ENCODE measurements at regions of chr1 and their contacts with region 1.

Region 1: GRCh38 chr1:116139592-116140134 is 28.5 kb downstream of the MAB21L3 start:
- DNase-seq: no peak
- H3K4me3 ChIP-seq: no peak overlapping the region
- H3K4me3 Mint-ChIP-seq: no peak overlapping the region
- H3K27ac ChIP-seq: no peak overlapping the region
- H3K27ac Mint-ChIP-seq: no peak overlapping the region
- H3K4me1 ChIP-seq: no peaks in the 10 kb centered on the region
- H3K4me1 Mint-ChIP-seq: peaks cover 5 to 8% (median 6%) of the 10 kb centered on the region in 4 donors
- H3K27me3 ChIP-seq: no peaks in the 10 kb centered on the region
- H3K27me3 Mint-ChIP-seq: peaks cover 4 to 7% of the 10 kb centered on the region in 2 donors

Region 2: DNA sequence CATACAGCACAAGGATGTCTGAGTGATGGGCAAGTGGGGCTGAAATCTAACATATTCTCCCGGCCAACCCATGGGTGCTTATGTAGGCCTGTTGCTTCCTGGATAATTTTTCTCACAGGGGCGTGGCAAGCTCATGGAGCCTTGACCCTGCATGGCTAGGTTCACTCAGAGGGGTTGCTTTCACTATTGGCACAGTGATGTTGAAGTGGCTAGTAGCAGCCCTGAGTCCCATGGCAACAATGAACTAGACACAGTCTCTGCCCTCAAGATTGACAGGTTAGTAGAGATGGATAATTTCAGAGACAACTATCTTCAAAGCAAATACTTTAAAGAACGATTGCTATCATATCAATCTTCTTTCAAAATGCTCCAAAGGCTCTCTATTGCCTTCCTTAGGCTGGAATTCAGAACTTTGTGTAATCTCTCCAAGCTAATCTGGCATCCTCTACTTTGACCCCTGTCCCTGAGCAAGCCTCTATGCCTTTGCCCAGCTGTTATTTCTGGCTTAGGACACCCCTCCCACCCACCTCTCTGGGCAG is 34.9 kb before region 1 on chr1:
- CTCF ChIA-PET with region 1: no interaction called
- POLR2A ChIA-PET with region 1: no interaction called
- intact Hi-C with region 1: no loop called
- DNase-seq: no peak
- H3K4me3 ChIP-seq: no peak overlapping the region
- H3K4me3 Mint-ChIP-seq: no peak overlapping the region
- H3K27ac ChIP-seq: no peak overlapping the region
- H3K27ac Mint-ChIP-seq: no peak overlapping the region
- H3K4me1 ChIP-seq: no peaks in the 10 kb centered on the region
- H3K4me1 Mint-ChIP-seq: no peaks in the 10 kb centered on the region
- H3K27me3 ChIP-seq: no peaks in the 10 kb centered on the region
- H3K27me3 Mint-ChIP-seq: peaks cover 0 to 7% of the 10 kb centered on the region in 2 donors

Region 3: GRCh38 chr1:116151739-116152576 is 12.3 kb after region 1 on chr1:
- CTCF ChIA-PET with region 1: interaction called, 63 read pairs
- POLR2A ChIA-PET with region 1: interaction called, 4 read pairs
- intact Hi-C with region 1: no loop called
- DNase-seq: peak; percentile 72 to 81 (median 76)
- H3K4me3 ChIP-seq: peak overlapping the region; percentile 23 to 28
- H3K4me3 Mint-ChIP-seq: peak overlapping the region; percentile 46 to 87 (median 80)
- H3K27ac ChIP-seq: peak overlapping the region; percentile 17
- H3K27ac Mint-ChIP-seq: peak overlapping the region; percentile 81 to 93 (median 88)
- H3K4me1 ChIP-seq: peaks cover 17% of the 10 kb centered on the region
- H3K4me1 Mint-ChIP-seq: peaks cover 10 to 23% (median 15%) of the 10 kb centered on the region in 4 donors
- H3K27me3 ChIP-seq: no peaks in the 10 kb centered on the region
- H3K27me3 Mint-ChIP-seq: peaks cover 0 to 3% of the 10 kb centered on the region in 2 donors

Region 4: GRCh38 chr1:116232989-116233514 is 93.4 kb after region 1 on chr1:
- CTCF ChIA-PET with region 1: interaction called, 17 read pairs
- POLR2A ChIA-PET with region 1: no interaction called
- intact Hi-C with region 1: loop called (anchors 1 kb)
- DNase-seq: peak; percentile 34 to 51 (median 44)
- H3K4me3 ChIP-seq: no peak overlapping the region
- H3K4me3 Mint-ChIP-seq: no peak overlapping the region
- H3K27ac ChIP-seq: no peak overlapping the region
- H3K27ac Mint-ChIP-seq: peak overlapping the region in 4 of 7 donors; percentile 47 to 83 (median 68)
- H3K4me1 ChIP-seq: peaks cover 10% of the 10 kb centered on the region
- H3K4me1 Mint-ChIP-seq: peaks cover 15 to 23% (median 20%) of the 10 kb centered on the region in 4 donors
- H3K27me3 ChIP-seq: no peaks in the 10 kb centered on the region
- H3K27me3 Mint-ChIP-seq: no peaks in the 10 kb centered on the region

Region 5: DNA sequence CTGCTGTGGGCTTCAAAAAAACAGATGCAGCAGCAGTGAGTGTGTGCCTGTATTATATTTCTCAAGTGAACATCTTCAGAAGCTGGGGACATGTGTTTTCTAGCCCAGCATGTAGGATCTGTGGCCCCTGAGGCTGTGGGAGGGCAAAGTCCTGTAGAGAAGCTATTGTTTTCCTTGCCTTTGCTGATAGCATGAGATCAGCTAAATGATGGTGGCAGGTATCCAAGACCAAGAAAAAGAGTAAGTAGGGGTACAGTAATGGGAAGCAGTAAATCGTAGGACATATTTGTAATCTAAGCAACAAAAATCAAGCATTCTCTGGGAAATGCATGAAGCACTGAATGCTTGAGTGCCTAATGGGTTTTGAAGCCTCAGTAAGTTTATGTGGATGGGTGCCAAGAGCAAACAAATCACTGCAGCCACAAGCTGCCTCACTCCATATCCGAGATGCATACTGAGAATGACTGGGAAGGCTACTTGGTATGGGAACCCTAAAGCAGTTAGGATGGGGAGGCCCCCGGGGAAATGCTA is 332.8 kb after region 1 on chr1:
- CTCF ChIA-PET with region 1: interaction called, 13 read pairs
- POLR2A ChIA-PET with region 1: no interaction called
- intact Hi-C with region 1: no loop called
- DNase-seq: no peak
- H3K4me3 ChIP-seq: no peak overlapping the region
- H3K4me3 Mint-ChIP-seq: no peak overlapping the region
- H3K27ac ChIP-seq: no peak overlapping the region
- H3K27ac Mint-ChIP-seq: no peak overlapping the region
- H3K4me1 ChIP-seq: no peaks in the 10 kb centered on the region
- H3K4me1 Mint-ChIP-seq: no peaks in the 10 kb centered on the region
- H3K27me3 ChIP-seq: no peaks in the 10 kb centered on the region
- H3K27me3 Mint-ChIP-seq: no peaks in the 10 kb centered on the region

Region 6: DNA sequence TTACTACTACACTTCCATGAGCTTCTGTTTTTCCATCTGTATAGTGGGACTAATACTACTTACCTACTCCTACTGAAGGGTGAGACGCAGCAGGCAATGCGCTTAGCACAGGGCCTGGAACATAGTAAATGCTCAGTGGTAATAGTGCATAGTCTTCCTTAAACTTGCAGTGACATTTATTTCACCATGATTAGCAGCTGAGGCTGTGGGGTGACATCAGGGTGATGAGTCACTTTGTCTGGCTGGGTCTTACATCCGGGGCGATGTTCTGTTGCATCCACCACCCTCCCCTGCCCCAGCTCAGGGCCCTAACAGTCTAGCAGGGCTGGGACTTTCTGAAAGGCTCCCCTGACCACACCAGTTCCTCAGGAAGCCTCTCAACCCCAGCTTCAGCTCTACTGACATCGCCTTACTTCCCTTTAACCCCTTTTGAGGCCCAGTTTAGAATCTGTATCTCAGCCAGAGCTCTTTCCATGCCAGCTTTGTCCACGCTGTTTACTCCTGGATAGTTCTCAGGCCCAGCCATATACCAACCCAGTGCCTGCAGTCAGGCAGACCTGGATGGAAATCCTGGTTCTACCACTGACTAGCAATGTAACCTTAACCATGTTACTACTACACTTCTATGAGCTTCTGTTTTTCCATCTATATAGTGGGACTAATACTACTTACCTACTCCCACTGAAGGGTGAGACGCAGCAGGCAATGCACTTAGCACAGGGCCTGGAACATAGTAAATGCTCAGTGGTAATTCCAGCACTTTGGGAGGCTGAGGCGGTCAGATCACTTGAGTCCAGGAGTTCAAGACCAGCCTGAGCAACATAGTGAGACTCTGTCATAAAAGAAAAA is 364.9 kb after region 1 on chr1:
- CTCF ChIA-PET with region 1: interaction called, 155 read pairs
- POLR2A ChIA-PET with region 1: interaction called, 14 read pairs
- intact Hi-C with region 1: loop called (anchors 1 kb)
- DNase-seq: peak; percentile 85 to 98 (median 89)
- H3K4me3 ChIP-seq: no peak overlapping the region
- H3K4me3 Mint-ChIP-seq: peak overlapping the region in 7 of 8 donors; percentile 17 to 75 (median 67)
- H3K27ac ChIP-seq: peak overlapping the region; percentile 86
- H3K27ac Mint-ChIP-seq: peak overlapping the region; percentile 91 to 98 (median 94)
- H3K4me1 ChIP-seq: peaks cover 78% of the 10 kb centered on the region
- H3K4me1 Mint-ChIP-seq: peaks cover 48 to 86% (median 63%) of the 10 kb centered on the region in 4 donors
- H3K27me3 ChIP-seq: no peaks in the 10 kb centered on the region
- H3K27me3 Mint-ChIP-seq: no peaks in the 10 kb centered on the region